Keratinocyte (primary cell): ENCODE measurements at regions of chr1 and their contacts with region 1.

Region 1: GRCh38 chr1:196344453-196344852 is 263.8 kb downstream of the KCNT2 start:
- DNase-seq: no peak
- H3K4me3 ChIP-seq: no peak overlapping the region
- H3K27ac ChIP-seq: no peak overlapping the region
- H3K4me1 ChIP-seq: no peaks in the 10 kb centered on the region
- H3K27me3 ChIP-seq: no peaks in the 10 kb centered on the region
- CTCF ChIP-seq: no peak

Region 2: GRCh38 chr1:196660852-196661251 is 316.4 kb after region 1 on chr1:
- dilution Hi-C with region 1: loop called (anchors 25 kb)
- DNase-seq: no peak
- H3K4me3 ChIP-seq: no peak overlapping the region
- H3K27ac ChIP-seq: no peak overlapping the region
- H3K4me1 ChIP-seq: no peaks in the 10 kb centered on the region
- H3K27me3 ChIP-seq: no peaks in the 10 kb centered on the region
- CTCF ChIP-seq: peak in 1 of 3 experiments; percentile 28